CD4-positive, alpha-beta T cell (primary cell): ENCODE measurements at regions of chr18 and their contacts with region 1.

Region 1: GRCh38 chr18:3665780-3666525 is 216.0 kb downstream of the TGIF1 start:
- DNase-seq: peak; percentile 48 to 86 (median 70)
- ATAC-seq: peak; percentile 88
- H3K4me3 ChIP-seq: peak overlapping the region; percentile 19
- H3K4me3 Mint-ChIP-seq: no peak overlapping the region
- H3K27ac ChIP-seq: no peak overlapping the region
- H3K27ac Mint-ChIP-seq: no peak overlapping the region
- H3K4me1 ChIP-seq: peaks cover 7% of the 10 kb centered on the region
- H3K4me1 Mint-ChIP-seq: peaks cover 7% of the 10 kb centered on the region
- H3K27me3 ChIP-seq: no peaks in the 10 kb centered on the region
- H3K27me3 Mint-ChIP-seq: no peaks in the 10 kb centered on the region
- CTCF ChIP-seq: peak; percentile 94

Region 2: DNA sequence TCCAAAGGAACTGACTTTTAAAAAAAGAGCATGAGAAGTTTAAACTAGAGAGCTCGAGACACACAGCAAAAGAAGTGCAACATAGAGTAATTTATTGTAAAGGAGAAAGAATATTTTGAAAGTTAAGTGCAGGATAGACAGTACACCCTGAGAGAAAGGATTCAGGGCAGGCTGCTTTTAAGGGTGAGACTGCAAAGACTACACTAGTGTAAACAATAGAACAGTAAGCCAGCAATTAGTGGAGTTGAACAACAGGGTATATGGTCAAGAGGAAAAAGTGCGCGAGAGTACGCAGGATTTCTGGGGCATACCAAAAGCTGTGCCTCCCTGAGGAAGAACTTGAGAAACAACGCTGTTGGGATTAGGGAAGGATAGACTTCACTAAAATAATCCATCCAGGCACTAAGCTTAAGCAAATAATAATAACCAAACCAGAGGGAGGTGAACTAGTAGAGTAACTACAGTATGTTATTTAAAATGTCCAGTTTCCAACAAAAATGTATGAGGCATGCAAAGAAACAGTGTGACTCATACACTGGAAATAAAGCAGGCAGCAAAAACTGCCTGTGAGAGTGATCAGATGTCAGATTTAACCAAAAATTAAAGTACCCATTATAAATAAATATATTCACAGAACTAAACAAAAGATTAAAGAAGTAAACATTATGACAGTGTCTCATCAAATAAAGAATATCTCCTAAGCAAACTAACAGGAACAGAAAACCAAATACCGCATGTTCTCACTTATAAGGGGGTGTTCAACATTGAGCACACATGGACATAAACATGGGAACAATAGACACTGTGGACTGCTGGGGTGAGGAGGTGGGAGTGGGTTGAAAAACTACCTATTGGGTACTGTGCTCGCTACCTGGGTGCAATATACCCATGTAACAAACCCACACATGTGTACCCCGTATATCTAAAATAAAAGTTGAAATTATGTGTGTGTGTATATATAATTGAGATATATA is 859.7 kb before region 1 on chr18:
- CTCF ChIA-PET with region 1: no interaction called
- POLR2A ChIA-PET with region 1: no interaction called
- intact Hi-C with region 1: no loop called
- DNase-seq: no peak
- ATAC-seq: no peak
- H3K4me3 ChIP-seq: no peak overlapping the region
- H3K4me3 Mint-ChIP-seq: no peak overlapping the region
- H3K27ac ChIP-seq: no peak overlapping the region
- H3K27ac Mint-ChIP-seq: no peak overlapping the region
- H3K4me1 ChIP-seq: no peaks in the 10 kb centered on the region
- H3K4me1 Mint-ChIP-seq: no peaks in the 10 kb centered on the region
- H3K27me3 ChIP-seq: no peaks in the 10 kb centered on the region
- H3K27me3 Mint-ChIP-seq: no peaks in the 10 kb centered on the region
- CTCF ChIP-seq: no peak

Region 3: DNA sequence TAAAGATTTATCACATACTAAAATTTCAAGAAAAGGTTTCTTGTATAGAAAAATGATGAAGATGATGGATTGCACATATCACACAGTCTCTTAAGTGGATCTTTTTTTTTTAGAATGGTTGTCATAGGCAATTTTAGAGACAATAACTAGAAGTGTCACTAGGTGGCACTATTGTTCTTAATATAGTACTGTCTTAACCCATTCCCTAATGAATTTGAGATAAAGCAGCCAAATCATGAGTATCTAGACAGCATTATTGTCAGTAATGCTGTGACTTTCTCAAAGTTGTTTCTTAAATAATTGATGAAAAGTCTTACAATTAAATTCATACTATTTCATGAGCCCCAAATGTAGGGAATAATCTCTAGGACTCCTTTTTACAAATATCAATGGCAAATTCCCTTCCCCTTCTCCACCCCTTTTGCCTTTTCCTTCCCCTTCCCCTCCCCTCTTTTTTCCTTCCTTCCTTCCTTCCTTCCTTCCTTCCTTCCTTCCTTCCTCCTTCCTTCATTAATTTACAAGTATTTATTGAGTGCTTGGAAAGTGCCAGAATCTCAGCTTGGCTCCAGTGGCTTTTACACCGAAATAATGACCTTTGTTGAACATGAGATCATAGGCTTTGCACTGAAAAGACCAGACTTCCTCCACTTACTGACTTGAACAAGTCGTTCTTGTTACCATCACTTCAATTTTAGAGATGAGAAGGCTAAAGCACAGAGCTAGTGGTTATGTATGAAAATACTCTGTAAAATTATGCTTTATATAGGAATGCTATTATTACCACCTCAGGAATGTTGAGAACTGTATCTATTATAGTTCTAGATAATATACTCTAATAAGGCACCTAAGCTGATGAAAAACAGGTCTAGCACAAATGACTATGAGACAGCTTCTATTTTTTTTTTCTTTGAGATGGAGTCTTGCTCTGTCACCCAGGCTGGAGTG is 384.2 kb before region 1 on chr18:
- CTCF ChIA-PET with region 1: interaction called, 11 read pairs
- POLR2A ChIA-PET with region 1: interaction called, 4 read pairs
- intact Hi-C with region 1: loop called (anchors 1 kb)
- DNase-seq: peak in 3 of 14 experiments; percentile 79 to 83 (median 83)
- ATAC-seq: peak; percentile 87
- H3K4me3 ChIP-seq: no peak overlapping the region
- H3K4me3 Mint-ChIP-seq: no peak overlapping the region
- H3K27ac ChIP-seq: no peak overlapping the region
- H3K27ac Mint-ChIP-seq: no peak overlapping the region
- H3K4me1 ChIP-seq: no peaks in the 10 kb centered on the region
- H3K4me1 Mint-ChIP-seq: no peaks in the 10 kb centered on the region
- H3K27me3 ChIP-seq: no peaks in the 10 kb centered on the region
- H3K27me3 Mint-ChIP-seq: no peaks in the 10 kb centered on the region
- CTCF ChIP-seq: peak; percentile 82

Region 4: DNA sequence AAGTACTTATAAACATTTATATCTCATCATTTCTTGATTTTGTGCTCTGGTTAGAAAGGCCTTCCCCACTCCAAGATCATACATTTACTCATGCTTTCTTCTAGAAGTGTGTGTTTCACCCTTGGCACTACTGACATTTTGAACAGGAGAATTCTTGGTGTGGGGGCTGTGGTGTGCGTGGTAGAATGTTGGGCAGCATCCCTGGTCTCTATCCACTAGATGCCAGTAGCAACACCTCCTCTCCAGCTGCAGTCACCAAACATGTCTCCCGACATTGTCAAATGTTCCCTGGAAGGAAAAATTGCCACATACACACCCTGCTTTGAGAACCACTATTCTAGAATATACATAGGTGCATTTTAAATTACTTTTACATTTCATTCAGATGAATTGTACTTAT is 224.7 kb before region 1 on chr18:
- CTCF ChIA-PET with region 1: interaction called, 6 read pairs
- POLR2A ChIA-PET with region 1: no interaction called
- intact Hi-C with region 1: loop called in 1 of 2 experiments (anchors 5 kb)
- DNase-seq: peak in 5 of 14 experiments; percentile 2 to 69 (median 49)
- ATAC-seq: peak; percentile 46
- H3K4me3 ChIP-seq: no peak overlapping the region
- H3K4me3 Mint-ChIP-seq: no peak overlapping the region
- H3K27ac ChIP-seq: no peak overlapping the region
- H3K27ac Mint-ChIP-seq: no peak overlapping the region
- H3K4me1 ChIP-seq: no peaks in the 10 kb centered on the region
- H3K4me1 Mint-ChIP-seq: peaks cover 4% of the 10 kb centered on the region
- H3K27me3 ChIP-seq: no peaks in the 10 kb centered on the region
- H3K27me3 Mint-ChIP-seq: no peaks in the 10 kb centered on the region
- CTCF ChIP-seq: peak; percentile 51

Region 5: GRCh38 chr18:3538456-3538855 is 127.5 kb before region 1 on chr18:
- CTCF ChIA-PET with region 1: no interaction called
- POLR2A ChIA-PET with region 1: no interaction called
- intact Hi-C with region 1: no loop called
- DNase-seq: no peak
- ATAC-seq: no peak
- H3K4me3 ChIP-seq: no peak overlapping the region
- H3K4me3 Mint-ChIP-seq: no peak overlapping the region
- H3K27ac ChIP-seq: no peak overlapping the region
- H3K27ac Mint-ChIP-seq: no peak overlapping the region
- H3K4me1 ChIP-seq: no peaks in the 10 kb centered on the region
- H3K4me1 Mint-ChIP-seq: no peaks in the 10 kb centered on the region
- H3K27me3 ChIP-seq: no peaks in the 10 kb centered on the region
- H3K27me3 Mint-ChIP-seq: peaks cover 9% of the 10 kb centered on the region
- CTCF ChIP-seq: no peak

Region 6: GRCh38 chr18:3585656-3586509 is 80.1 kb before region 1 on chr18:
- CTCF ChIA-PET with region 1: interaction called, 17 read pairs
- POLR2A ChIA-PET with region 1: interaction called, 3 read pairs
- intact Hi-C with region 1: loop called (anchors 5 kb)
- DNase-seq: peak; percentile 48 to 85 (median 60)
- ATAC-seq: peak; percentile 86
- H3K4me3 ChIP-seq: no peak overlapping the region
- H3K4me3 Mint-ChIP-seq: no peak overlapping the region
- H3K27ac ChIP-seq: no peak overlapping the region
- H3K27ac Mint-ChIP-seq: no peak overlapping the region
- H3K4me1 ChIP-seq: peaks cover 11% of the 10 kb centered on the region
- H3K4me1 Mint-ChIP-seq: peaks cover 12% of the 10 kb centered on the region
- H3K27me3 ChIP-seq: no peaks in the 10 kb centered on the region
- H3K27me3 Mint-ChIP-seq: no peaks in the 10 kb centered on the region
- CTCF ChIP-seq: peak; percentile 77

Region 7: DNA sequence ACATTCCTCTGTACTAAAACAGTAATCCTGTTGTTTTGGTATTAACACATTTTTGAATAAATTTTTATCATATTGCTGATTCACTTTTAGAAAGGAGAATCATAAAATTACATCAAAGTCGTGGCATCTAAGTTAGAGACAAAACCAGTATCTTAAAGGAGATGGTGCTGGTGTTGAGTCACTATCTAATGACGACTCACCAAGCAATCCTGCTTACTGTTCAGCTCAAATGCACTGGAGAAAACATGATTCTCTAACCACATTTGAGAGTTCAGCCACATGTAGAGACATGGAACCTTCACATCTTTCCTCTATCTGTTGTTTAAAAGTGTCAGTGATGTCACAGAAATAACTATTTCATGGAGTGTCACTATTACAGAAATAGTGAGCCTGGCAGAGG is 257.8 kb after region 1 on chr18:
- CTCF ChIA-PET with region 1: no interaction called
- POLR2A ChIA-PET with region 1: no interaction called
- intact Hi-C with region 1: no loop called
- DNase-seq: no peak
- ATAC-seq: no peak
- H3K4me3 ChIP-seq: no peak overlapping the region
- H3K4me3 Mint-ChIP-seq: no peak overlapping the region
- H3K27ac ChIP-seq: no peak overlapping the region
- H3K27ac Mint-ChIP-seq: no peak overlapping the region
- H3K4me1 ChIP-seq: no peaks in the 10 kb centered on the region
- H3K4me1 Mint-ChIP-seq: no peaks in the 10 kb centered on the region
- H3K27me3 ChIP-seq: no peaks in the 10 kb centered on the region
- H3K27me3 Mint-ChIP-seq: peaks cover 22% of the 10 kb centered on the region
- CTCF ChIP-seq: no peak